SK-N-SH (cell line): ENCODE measurements at regions of chr10 and their contacts with region 1.

Region 1: DNA sequence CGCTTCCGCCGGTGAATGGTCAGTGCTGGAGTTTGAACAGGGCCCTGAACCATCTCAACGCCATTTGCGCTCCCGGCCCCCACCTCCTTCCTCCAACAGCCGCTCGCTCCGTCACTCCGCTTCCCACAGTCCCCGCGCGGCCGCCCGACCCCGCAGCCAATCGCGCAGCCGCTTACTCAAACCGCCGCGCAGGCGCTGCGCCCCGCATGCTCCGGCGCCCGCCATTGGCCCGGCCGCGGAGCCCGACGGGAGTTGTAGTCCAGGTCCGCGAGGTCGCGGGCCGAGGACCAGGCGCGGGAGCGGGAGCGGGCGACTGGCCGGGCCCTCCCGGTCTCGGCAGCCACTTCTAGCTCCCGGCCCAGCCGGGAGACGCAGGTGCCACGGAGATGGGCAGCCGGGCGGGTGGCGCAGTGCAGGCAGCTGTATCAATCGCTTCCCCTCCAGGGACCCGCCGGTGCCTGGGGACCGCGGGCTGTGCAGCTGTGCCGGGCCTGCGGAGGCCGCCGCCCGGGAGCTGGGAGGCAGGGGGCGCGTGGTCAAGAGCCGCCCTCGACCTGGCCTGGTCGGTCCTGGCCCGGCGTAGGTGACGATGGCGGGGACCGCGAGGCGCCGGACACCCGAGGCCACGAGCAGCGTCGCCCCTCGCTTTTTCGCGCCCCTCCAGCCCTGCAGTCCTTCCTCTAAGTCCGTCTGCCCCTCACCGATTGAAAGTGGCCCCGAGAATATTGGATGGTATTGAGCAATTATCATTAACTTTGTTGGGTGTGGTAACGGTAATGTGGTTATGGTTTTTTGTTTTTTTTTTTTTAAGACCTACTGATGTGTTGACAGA is at the start of gene WAPL:
- DNase-seq: peak; percentile 98
- H3K4me3 ChIP-seq: peak within 1 kb of the TSS; percentile 92 to 94
- H3K27ac ChIP-seq: peak within 1 kb of the TSS; percentile 81 to 88
- H3K4me1 ChIP-seq: peaks cover 18 to 24% of the 10 kb centered on the region in 2 experiments; a peak in 3 of 4 replicates
- H3K27me3 ChIP-seq: no peaks in the 10 kb centered on the region
- CTCF ChIP-seq: no peak
- EP300 ChIP-seq: no peak
- RAD21 ChIP-seq: no peak
- polyA plus RNA-seq, gene WAPL: 8.7 and 8.9 TPM in 2 replicates

Region 2: DNA sequence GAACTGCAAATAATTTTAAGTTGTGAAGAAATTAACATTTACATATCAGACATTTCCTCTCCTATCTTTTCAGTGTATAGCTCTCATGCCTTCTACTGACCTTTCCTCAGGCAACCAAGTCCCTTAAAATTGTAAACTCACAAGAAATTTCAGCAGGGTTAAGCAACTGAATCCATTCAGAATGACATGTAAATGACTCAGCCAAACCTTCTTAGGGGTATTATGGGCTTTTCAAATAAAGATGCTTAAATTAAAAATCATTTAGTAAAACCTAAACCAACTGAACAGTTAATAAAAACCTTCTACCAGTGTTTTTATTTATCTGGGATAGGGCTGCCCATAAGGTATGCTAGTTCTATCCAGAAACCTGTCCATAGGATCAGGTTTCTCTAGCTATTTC is 21.0 kb before region 1 on chr10:
- CTCF ChIA-PET with region 1: no interaction called
- POLR2A ChIA-PET with region 1: no interaction called
- DNase-seq: no peak
- H3K4me3 ChIP-seq: no peak overlapping the region
- H3K27ac ChIP-seq: no peak overlapping the region
- H3K4me1 ChIP-seq: peaks cover 0 to 14% of the 10 kb centered on the region in 2 experiments; a peak in 1 of 4 replicates
- H3K27me3 ChIP-seq: no peaks in the 10 kb centered on the region
- CTCF ChIP-seq: no peak
- EP300 ChIP-seq: no peak
- RAD21 ChIP-seq: no peak

Region 3: DNA sequence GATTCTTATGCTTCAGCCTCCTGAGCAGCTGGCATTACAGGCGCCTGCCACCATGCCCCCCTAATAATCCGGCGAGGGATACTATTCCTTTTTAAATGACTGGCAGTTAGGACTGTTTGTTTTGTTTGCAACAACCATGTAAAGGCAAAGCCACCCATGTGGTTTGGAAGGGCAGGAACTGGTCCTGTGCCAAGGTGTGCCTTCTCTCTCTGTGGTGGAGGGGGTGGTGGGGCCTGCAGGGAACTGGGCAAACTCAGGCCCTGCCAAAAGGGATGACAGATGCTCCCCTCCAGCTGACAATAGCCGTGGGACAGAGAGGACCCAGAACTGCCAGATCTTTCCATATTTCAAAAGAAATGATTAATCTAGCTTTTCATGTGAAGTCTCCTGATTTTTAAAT is 23.2 kb after region 1 on chr10:
- CTCF ChIA-PET with region 1: no interaction called
- POLR2A ChIA-PET with region 1: no interaction called
- DNase-seq: peak; percentile 21
- H3K4me3 ChIP-seq: no peak overlapping the region
- H3K27ac ChIP-seq: no peak overlapping the region
- H3K4me1 ChIP-seq: peaks cover 0 to 1% of the 10 kb centered on the region in 2 experiments; a peak in 1 of 4 replicates
- H3K27me3 ChIP-seq: no peaks in the 10 kb centered on the region
- CTCF ChIP-seq: no peak
- EP300 ChIP-seq: no peak
- RAD21 ChIP-seq: no peak

Region 4: DNA sequence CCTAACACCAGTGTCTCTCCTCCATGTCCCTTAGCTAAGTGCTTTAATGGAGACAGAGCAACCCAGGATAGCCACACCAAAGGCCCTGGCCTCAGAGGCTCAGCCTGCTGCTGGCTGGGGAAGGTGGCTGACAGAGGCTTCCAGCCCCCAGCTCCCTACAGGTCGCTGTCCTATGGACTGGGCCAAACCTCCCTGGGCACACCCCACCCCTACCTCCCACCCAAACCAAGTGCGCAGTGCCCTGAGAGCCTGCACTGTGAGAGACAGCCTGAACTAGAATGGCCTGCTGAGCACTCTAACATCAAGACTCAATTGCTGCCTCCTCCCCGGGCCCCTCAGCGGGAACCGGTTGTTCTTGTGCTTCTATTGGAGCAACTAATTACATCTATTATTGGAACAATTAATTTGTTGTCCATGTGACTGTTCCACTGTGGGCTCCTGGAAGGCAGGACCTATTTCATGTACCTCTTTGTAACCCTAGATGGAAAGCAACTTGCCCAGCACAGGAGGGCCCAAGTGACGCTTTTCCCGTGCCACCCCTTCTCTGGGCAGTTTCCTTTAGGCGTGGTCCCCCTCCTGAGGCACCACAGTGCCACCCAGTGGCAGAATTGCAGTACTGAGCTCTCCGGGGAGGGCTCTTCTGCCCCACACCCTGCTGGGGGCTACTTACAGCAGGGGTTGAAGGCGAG is 63.3 kb after region 1 on chr10:
- CTCF ChIA-PET with region 1: interaction called, 13 read pairs
- POLR2A ChIA-PET with region 1: no interaction called
- DNase-seq: peak; percentile 86
- H3K4me3 ChIP-seq: peak overlapping the region in 1 of 2 experiments; percentile 48; a peak in 1 of 4 replicates
- H3K27ac ChIP-seq: no peak overlapping the region
- H3K4me1 ChIP-seq: no peaks in the 10 kb centered on the region; a peak in 1 of 4 replicates
- H3K27me3 ChIP-seq: no peaks in the 10 kb centered on the region
- CTCF ChIP-seq: peak; percentile 98
- EP300 ChIP-seq: no peak
- RAD21 ChIP-seq: peak; percentile 90